ENCODE measurements at regions of chr1 and their contacts with region 1.

Region 1: DNA sequence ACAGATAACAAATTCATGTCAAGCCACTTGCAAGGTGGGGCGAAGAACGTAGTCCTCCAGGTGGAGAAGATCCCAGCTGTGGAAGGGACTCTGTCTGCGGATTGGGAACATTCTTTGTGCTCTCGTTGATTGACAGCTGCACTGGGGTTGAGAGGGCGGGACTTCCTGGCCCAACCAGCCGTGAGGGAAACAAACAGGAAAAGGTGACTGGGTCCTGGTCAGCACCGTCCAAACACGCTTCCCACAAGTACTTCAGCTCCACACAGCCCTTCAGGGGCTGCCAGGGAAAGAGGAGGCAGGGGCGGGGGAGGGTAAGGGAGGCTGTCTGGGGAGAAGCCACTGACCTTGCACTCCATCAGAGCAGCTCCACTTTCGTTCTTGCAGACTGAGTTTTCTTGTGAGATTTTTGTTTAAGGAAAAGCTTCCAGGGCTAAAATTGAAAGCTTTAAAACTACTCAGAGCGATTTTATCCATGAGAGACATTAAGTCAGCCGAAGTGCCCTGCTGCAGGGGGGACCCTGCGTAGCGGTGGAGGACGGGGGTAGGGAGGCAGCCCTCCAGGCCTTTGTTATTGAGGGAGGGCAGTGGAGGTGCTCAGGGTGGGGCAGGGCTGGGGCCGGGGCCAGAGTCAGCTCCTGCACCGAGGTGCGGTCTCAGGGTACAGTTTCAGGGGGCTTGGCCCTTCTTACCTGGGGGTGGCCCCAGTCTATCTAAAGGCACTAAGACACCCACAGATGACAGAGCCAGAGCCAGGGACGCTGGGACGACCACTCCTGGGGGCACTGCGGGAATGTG is 21.6 kb upstream of the STUM start:
- DNase-seq: peak; percentile 65
- ATAC-seq: peak; percentile 80
- H3K4me3 ChIP-seq: peak overlapping the region; percentile 4; the same call in 1 of the 2 replicates
- H3K27ac ChIP-seq: no peak overlapping the region
- H3K4me1 ChIP-seq: peaks cover 4% of the 10 kb centered on the region; the same call in 1 of the 2 replicates
- H3K27me3 ChIP-seq: peaks cover 24% of the 10 kb centered on the region
- CTCF ChIP-seq: no peak

Region 2: DNA sequence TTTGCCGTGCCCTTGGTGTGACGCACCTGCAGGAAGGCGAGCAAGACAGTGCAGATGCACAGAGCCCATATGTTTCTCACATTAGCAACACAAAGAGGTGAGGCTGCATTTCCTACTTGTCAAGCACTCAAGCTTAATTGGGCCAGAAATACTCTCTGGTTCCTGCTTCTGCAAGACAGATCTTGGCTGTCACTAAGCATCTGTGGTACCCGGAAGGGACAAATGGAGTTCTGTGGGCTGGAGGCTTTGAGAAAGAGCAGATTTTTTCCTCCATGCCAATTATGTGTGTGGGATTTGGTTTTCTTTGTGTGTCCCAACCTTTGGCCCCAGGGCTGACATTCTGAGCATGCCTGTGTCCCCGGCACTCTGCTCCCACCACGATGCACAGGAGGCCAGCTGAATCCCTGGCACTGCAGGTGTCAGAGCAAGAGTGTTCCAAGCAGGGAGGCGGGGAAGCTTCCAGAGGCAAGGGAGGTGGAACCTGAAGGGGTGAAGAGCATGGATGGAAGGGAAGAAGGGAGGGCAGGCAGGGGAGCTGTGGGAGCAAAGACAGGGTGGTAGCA is 30.5 kb before region 1 on chr1:
- CTCF ChIA-PET with region 1: no interaction called
- POLR2A ChIA-PET with region 1: no interaction called
- intact Hi-C with region 1: no loop called
- DNase-seq: no peak
- ATAC-seq: no peak
- H3K4me3 ChIP-seq: no peak overlapping the region
- H3K27ac ChIP-seq: no peak overlapping the region
- H3K4me1 ChIP-seq: peaks cover 7% of the 10 kb centered on the region; the same call in 1 of the 2 replicates
- H3K27me3 ChIP-seq: peaks cover 1% of the 10 kb centered on the region; the same call in 1 of the 2 replicates
- CTCF ChIP-seq: no peak

Region 3: DNA sequence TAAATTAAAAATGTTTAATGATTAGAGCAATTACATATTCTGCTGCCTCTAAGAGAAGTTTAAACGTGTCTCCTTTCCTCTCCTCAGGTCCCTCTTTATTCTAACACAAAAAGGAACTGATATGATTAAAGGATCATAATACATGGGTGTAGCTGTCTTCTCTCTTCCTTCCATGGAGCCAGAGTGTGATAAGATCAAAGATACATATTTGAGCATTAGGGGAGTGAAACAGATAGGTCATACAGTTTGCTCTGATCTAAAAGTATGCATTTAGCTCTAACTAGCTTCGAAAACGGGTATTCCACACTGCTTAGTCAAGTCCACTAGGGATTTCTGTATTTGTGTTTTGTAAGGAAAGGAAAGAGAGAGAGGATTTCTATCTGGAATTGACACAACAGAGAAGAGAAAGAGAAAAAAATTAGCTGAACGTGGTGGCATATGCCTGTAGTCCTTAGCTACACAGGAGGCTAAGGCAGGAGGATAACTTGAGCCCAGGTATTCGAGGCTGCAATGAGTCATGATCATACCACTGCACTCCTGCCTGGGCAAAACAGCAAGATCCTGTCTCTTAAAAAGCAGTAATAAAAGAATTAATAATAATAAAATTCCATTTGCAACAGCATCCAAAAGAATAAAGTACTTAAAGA is 728.2 kb after region 1 on chr1:
- CTCF ChIA-PET with region 1: no interaction called
- POLR2A ChIA-PET with region 1: interaction called, 12 read pairs
- intact Hi-C with region 1: no loop called
- DNase-seq: no peak
- ATAC-seq: peak; percentile 65
- H3K4me3 ChIP-seq: no peak overlapping the region
- H3K27ac ChIP-seq: no peak overlapping the region
- H3K4me1 ChIP-seq: no peaks in the 10 kb centered on the region
- H3K27me3 ChIP-seq: no peaks in the 10 kb centered on the region
- CTCF ChIP-seq: no peak